Calu3 (cell line): ENCODE measurements at regions of chr3 and their contacts with region 1.

Region 1: GRCh38 chr3:52742418-52743041 is 28.2 kb downstream of the NEK4 start:
- DNase-seq: peak; percentile 18
- H3K4me3 Mint-ChIP-seq: no peak overlapping the region
- H3K27ac Mint-ChIP-seq: no peak overlapping the region
- H3K4me1 Mint-ChIP-seq: no peaks in the 10 kb centered on the region
- H3K27me3 Mint-ChIP-seq: no peaks in the 10 kb centered on the region
- CTCF ChIP-seq: peak; percentile 59

Region 2: DNA sequence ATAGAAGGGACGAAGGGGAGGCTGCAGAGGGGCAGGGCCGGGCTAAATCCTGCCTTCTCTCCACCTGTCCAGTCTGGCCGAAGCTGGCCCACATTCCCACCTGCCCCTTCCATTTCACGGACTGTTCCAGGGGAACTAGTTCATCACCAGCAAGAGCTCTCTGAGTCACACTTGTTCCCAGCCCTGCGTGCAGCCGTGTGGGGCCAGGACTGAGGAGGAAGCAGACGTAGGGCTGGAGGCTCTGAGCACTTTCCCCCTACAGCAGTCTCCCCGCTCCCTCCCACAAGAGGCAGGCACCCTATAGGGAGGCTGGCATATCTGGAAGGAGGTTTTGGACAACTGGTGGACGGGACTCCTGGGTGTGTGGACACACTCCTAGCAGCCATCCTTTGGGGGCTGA is 84.9 kb after region 1 on chr3:
- CTCF ChIA-PET with region 1: no interaction called
- intact Hi-C with region 1: loop called (anchors 2 kb)
- DNase-seq: peak; percentile 47
- H3K4me3 Mint-ChIP-seq: no peak overlapping the region
- H3K27ac Mint-ChIP-seq: peak overlapping the region; percentile 74
- H3K4me1 Mint-ChIP-seq: peaks cover 27% of the 10 kb centered on the region
- H3K27me3 Mint-ChIP-seq: no peaks in the 10 kb centered on the region
- CTCF ChIP-seq: no peak

Region 3: DNA sequence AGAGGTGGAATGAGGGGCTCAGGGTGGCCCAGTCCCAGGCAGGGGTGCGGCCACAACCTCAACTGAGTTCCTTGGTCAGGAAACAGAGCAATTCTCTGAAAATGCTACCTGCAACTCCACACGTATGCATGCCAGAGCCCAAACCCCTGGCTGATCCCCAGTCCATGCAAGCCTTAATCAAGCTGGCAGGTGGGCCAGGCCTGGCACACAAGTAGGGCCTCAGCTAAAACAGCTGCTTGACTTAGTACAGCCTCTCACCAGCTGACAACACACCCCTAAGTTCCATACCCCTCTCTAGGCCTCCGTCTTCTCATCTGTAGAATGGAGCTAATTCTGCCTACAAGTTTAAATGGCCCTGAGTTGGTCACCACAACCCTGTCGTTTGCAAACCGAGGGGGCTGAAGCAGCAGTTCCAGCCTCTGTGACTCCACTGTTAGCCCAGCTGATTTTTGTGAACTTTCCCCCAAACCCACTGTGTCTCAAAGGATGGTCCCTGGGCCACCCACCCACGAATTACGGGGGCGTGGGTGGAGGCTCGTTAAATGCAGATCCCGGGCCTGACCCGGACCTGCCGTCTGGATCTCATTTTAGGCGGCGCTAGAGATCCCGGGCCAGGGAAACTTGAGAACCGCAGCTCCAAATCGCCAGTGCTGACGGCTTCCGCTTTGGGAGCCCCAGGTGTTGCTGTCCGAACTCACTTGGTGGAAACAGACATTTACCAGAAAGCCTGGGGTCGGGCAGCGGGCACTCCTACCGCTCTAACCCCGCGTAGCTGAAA is 1102.8 kb after region 1 on chr3:
- CTCF ChIA-PET with region 1: no interaction called
- intact Hi-C with region 1: no loop called
- DNase-seq: peak; percentile 67
- H3K4me3 Mint-ChIP-seq: peak overlapping the region; percentile 59
- H3K27ac Mint-ChIP-seq: peak overlapping the region; percentile 83
- H3K4me1 Mint-ChIP-seq: peaks cover 52% of the 10 kb centered on the region
- H3K27me3 Mint-ChIP-seq: no peaks in the 10 kb centered on the region
- CTCF ChIP-seq: no peak